HCT116 (cell line): ENCODE measurements at regions of chr15 and their contacts with region 1.

Region 1: GRCh38 chr15:100918034-100918689 is 995 bp upstream of the LRRK1 start:
- DNase-seq: peak; percentile 67
- ATAC-seq: peak; percentile 85
- H3K4me3 ChIP-seq: peak overlapping the region; percentile 66 to 83
- H3K27ac ChIP-seq: peak overlapping the region; percentile 86
- H3K4me1 ChIP-seq: peaks cover 0 to 27% of the 10 kb centered on the region in 2 experiments; a peak in 1 of 4 replicates
- H3K27me3 ChIP-seq: no peaks in the 10 kb centered on the region
- CTCF ChIP-seq: peak; percentile 86 to 96 (median 90)
- POLR2A ChIP-seq: peak; percentile 25
- RAD21 ChIP-seq: peak; percentile 69

Region 2: DNA sequence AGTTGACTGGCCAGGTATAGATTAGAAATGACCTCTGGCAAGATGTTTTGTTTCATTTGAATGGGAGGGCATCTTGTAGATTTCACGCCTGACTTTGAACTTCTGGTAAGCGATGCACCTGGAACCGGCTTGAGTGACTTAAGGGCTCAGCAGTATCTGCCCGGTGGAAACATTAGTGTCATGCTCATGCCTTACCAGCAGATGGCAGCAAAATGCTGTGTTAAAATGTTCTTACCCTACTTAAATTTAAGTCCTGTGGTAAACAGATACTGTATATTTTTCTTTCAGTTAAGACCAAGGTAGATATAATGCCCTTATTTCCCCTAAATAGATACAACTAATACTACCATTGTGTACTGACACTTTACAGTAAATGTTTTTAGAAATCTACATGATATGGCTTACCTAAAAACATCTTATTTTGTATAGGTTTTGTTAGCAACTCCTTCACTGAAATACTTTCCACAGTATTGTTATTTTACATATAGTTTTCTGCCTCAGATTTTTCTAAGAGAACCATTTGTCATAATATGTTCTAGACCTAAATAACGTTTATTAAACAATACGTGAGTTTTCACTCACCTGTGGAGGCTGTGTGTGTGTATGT is 290.3 kb before region 1 on chr15:
- CTCF ChIA-PET with region 1: interaction called, 3 read pairs
- POLR2A ChIA-PET with region 1: no interaction called
- RAD21 ChIA-PET with region 1: no interaction called
- intact Hi-C with region 1: loop called (anchors 5 kb)
- DNase-seq: peak; percentile 69
- ATAC-seq: peak; percentile 92
- H3K4me3 ChIP-seq: no peak overlapping the region
- H3K27ac ChIP-seq: no peak overlapping the region
- H3K4me1 ChIP-seq: no peaks in the 10 kb centered on the region
- H3K27me3 ChIP-seq: no peaks in the 10 kb centered on the region
- CTCF ChIP-seq: peak; percentile 69 to 84 (median 73)
- POLR2A ChIP-seq: no peak
- RAD21 ChIP-seq: peak; percentile 86

Region 3: GRCh38 chr15:101251830-101252820 is 334.0 kb after region 1 on chr15 and contains the start of gene CHSY1:
- CTCF ChIA-PET with region 1: no interaction called
- POLR2A ChIA-PET with region 1: no interaction called
- RAD21 ChIA-PET with region 1: no interaction called
- intact Hi-C with region 1: loop called (anchors 5 kb)
- DNase-seq: peak; percentile 76
- ATAC-seq: peak; percentile 78
- H3K4me3 ChIP-seq: peak within 1 kb of the TSS; percentile 72 to 96
- H3K27ac ChIP-seq: peak within 1 kb of the TSS; percentile 81
- H3K4me1 ChIP-seq: peaks cover 13 to 21% of the 10 kb centered on the region in 2 experiments
- H3K27me3 ChIP-seq: no peaks in the 10 kb centered on the region
- CTCF ChIP-seq: no peak
- POLR2A ChIP-seq: peak; percentile 51
- RAD21 ChIP-seq: no peak
- total RNA-seq, gene CHSY1: 25.4 TPM

Region 4: DNA sequence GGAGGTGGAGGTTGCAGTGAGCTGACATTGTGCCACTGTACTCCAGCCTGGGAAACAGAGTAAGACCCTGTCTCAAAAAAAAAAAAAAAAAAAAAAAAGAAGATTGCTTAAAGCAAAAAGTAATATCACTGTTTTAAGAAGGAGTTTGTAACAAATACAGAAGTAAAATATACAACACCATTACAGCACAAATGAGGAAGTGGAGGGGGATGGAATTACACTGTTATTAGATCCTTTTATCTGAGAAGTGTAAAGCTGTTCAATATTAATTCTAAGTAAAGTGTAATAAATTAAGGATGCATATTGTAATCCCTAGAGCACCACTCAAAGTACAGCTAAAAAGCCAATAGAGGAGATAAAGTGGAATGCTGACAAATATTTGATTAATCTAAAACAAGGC is 423.9 kb after region 1 on chr15:
- CTCF ChIA-PET with region 1: no interaction called
- POLR2A ChIA-PET with region 1: no interaction called
- RAD21 ChIA-PET with region 1: no interaction called
- intact Hi-C with region 1: no loop called
- DNase-seq: no peak
- ATAC-seq: no peak
- H3K4me3 ChIP-seq: no peak overlapping the region
- H3K27ac ChIP-seq: no peak overlapping the region
- H3K4me1 ChIP-seq: no peaks in the 10 kb centered on the region
- H3K27me3 ChIP-seq: no peaks in the 10 kb centered on the region
- CTCF ChIP-seq: no peak
- POLR2A ChIP-seq: no peak
- RAD21 ChIP-seq: no peak

Region 5: DNA sequence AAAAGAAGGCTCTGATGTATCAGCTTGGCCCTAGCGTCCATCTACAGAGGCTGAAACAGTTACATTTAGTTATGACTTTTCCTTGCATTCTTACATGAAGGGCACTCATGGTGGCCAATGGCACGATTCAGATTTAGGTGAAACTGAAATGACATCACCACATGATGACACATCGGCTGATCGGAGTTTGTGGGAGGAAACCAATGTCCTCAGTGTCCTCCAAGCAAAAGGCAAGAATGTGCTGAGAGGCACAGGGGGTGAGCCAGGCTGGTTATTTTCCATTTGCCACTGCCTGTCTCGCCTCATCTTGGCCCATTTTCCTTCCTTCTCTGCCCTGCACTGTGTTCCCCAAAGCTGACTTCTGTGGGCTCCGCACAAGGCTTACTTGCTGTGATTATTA is 771.7 kb after region 1 on chr15:
- CTCF ChIA-PET with region 1: no interaction called
- POLR2A ChIA-PET with region 1: no interaction called
- RAD21 ChIA-PET with region 1: no interaction called
- intact Hi-C with region 1: no loop called
- DNase-seq: no peak
- ATAC-seq: no peak
- H3K4me3 ChIP-seq: no peak overlapping the region
- H3K27ac ChIP-seq: no peak overlapping the region
- H3K4me1 ChIP-seq: no peaks in the 10 kb centered on the region
- H3K27me3 ChIP-seq: no peaks in the 10 kb centered on the region
- CTCF ChIP-seq: no peak
- POLR2A ChIP-seq: no peak
- RAD21 ChIP-seq: no peak